Dendritic cell treated with granulocyte-macrophage colony-stimulating factor and Interleukin-4, amounts not matched to agents 40 ng/mL and 50 ng/mL, for 4 days (primary cell): ENCODE measurements at regions of chr4 and their contacts with region 1.

Region 1: GRCh38 chr4:127732613-127733328 is 2.6 kb downstream of the SLC25A31 start:
- H3K4me3 Mint-ChIP-seq: no peak overlapping the region
- H3K27ac Mint-ChIP-seq: no peak overlapping the region
- H3K4me1 Mint-ChIP-seq: no peaks in the 10 kb centered on the region
- H3K27me3 Mint-ChIP-seq: no peaks in the 10 kb centered on the region

Region 2: DNA sequence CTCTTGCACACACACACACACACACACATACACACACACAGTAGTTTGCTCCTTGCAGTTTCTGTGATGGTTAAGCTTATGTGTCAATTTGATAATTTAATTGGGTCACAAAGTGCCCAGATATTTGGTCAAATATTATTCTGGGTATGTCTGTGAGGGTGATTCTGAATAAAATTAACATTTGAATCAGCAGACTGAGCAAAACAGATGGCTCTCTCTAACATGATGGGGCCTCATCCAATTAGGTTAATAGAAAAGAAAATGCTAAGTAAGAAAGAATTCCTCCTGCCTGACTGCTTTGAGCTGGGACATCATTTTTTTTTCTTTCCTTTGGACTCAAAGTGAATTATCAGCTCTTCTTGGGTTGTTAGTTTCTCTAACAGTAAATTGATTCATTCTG is 291.2 kb before region 1 on chr4:
- intact Hi-C with region 1: no loop called
- H3K4me3 Mint-ChIP-seq: no peak overlapping the region
- H3K27ac Mint-ChIP-seq: no peak overlapping the region
- H3K4me1 Mint-ChIP-seq: no peaks in the 10 kb centered on the region
- H3K27me3 Mint-ChIP-seq: no peaks in the 10 kb centered on the region

Region 3: DNA sequence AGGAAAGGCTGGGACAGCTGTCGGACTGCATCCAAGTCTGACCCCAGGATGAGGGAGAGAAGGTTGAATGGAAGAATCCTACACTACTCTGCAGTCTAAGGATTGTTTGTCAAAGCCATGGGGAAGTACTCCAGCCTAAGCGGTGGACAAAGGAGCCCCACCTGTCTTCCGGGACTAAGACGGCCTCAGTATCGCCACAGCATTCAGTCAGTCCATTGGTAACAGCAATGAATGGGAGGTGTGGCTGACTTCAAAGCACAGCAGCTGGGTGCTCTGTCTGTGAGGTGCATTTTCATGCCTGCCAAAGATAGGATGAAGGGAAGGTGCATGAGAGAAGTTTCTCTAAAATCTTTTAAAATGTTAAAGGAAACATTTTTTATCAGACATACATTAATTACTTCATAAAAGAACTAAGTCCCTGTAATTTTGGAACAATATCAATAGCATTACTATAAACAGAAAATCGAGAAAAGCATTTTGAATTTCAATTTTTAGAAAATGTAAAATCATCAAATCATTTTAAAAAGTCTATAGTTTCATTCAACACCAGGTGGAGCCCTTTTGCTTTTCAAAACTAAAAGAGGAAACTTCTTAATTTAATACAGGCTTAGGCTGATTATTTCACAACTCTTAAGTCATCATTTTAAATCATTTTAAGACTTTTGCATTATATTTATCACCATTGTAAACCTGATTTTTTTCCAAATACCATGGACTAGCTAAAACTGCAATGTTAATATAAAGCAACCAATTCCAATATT is 127.6 kb before region 1 on chr4:
- intact Hi-C with region 1: loop called (anchors 1 kb)
- H3K4me3 Mint-ChIP-seq: no peak overlapping the region
- H3K27ac Mint-ChIP-seq: no peak overlapping the region
- H3K4me1 Mint-ChIP-seq: no peaks in the 10 kb centered on the region
- H3K27me3 Mint-ChIP-seq: peaks cover 7% of the 10 kb centered on the region